WTC11 (cell line): ENCODE measurements at regions of chr18 and their contacts with region 1.

Region 1: GRCh38 chr18:12934454-12935071 is 13.2 kb upstream of the SEH1L start:
- DNase-seq: peak; percentile 87
- ATAC-seq: peak; percentile 95
- H3K4me3 Mint-ChIP-seq: no peak overlapping the region
- H3K27ac Mint-ChIP-seq: no peak overlapping the region
- H3K4me1 Mint-ChIP-seq: peaks cover 6% of the 10 kb centered on the region
- H3K27me3 Mint-ChIP-seq: no peaks in the 10 kb centered on the region; the same call in 1 of the 2 replicates
- CTCF ChIP-seq: peak; percentile 66

Region 2: DNA sequence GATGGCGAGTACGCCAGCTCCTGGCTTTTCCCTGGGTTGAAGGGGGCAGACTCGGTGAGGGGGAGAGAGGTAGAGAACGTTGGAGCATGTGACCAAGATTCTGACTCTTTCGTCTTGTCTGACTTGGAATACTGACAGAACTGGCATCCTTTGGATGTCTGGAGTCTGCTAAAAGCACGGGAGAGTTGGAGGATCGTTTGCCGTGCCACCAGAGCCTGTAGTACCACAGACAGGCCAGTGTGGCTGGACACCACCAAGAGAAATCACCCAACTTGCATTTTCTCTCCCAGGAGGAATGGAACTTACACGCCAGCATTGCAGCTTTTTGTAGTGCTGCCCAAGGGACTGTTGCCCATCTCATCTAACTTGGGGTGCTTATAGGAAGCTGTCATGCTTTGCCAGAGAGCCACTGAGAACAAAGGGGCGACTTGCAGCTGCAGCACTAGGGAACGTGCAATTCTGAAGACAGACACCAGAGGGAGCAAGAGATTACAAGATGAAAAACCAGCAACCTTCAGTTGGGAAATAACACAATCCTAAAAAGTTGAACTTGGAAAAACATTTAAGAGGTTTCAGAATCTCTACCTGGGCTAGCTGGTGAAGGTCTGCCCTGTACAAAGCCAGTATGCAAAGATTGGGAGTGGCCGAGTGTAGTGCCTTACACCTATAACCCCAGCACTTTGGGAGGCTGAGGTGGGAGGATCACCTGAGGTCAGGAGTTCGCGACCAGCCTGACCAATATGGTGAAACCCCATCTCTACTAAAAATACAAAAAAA is 207.6 kb before region 1 on chr18:
- CTCF ChIA-PET with region 1: interaction called, 56 read pairs
- POLR2A ChIA-PET with region 1: no interaction called
- DNase-seq: peak; percentile 60
- ATAC-seq: peak; percentile 89
- H3K4me3 Mint-ChIP-seq: no peak overlapping the region
- H3K27ac Mint-ChIP-seq: peak overlapping the region; percentile 43
- H3K4me1 Mint-ChIP-seq: peaks cover 7% of the 10 kb centered on the region
- H3K27me3 Mint-ChIP-seq: no peaks in the 10 kb centered on the region
- CTCF ChIP-seq: peak; percentile 90

Region 3: DNA sequence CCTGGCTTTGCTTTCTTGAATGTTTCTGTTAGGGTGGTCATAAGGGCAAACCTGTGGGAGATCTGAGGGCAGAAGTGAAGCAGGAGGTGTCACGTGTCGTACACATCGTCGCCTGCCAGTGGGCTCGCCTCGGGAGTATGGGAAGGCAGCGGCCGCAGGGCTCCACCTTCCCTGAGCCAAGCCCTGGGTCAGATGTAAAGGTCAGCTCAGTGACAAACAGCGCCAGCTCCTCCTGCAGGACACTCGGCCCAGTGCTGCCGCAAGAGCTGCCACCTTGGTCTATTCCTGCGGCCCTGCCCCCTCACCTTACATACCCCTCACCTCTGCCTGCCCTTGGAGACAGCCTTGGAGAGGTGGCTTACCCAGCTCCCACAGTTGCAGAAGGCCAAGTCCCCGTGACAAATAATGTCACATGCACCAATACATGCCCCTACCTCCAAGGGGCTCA is 167.6 kb before region 1 on chr18:
- CTCF ChIA-PET with region 1: interaction called, 27 read pairs
- POLR2A ChIA-PET with region 1: no interaction called
- DNase-seq: peak; percentile 82
- ATAC-seq: peak; percentile 99
- H3K4me3 Mint-ChIP-seq: no peak overlapping the region
- H3K27ac Mint-ChIP-seq: no peak overlapping the region
- H3K4me1 Mint-ChIP-seq: peaks cover 4% of the 10 kb centered on the region
- H3K27me3 Mint-ChIP-seq: no peaks in the 10 kb centered on the region
- CTCF ChIP-seq: no peak

Region 4: DNA sequence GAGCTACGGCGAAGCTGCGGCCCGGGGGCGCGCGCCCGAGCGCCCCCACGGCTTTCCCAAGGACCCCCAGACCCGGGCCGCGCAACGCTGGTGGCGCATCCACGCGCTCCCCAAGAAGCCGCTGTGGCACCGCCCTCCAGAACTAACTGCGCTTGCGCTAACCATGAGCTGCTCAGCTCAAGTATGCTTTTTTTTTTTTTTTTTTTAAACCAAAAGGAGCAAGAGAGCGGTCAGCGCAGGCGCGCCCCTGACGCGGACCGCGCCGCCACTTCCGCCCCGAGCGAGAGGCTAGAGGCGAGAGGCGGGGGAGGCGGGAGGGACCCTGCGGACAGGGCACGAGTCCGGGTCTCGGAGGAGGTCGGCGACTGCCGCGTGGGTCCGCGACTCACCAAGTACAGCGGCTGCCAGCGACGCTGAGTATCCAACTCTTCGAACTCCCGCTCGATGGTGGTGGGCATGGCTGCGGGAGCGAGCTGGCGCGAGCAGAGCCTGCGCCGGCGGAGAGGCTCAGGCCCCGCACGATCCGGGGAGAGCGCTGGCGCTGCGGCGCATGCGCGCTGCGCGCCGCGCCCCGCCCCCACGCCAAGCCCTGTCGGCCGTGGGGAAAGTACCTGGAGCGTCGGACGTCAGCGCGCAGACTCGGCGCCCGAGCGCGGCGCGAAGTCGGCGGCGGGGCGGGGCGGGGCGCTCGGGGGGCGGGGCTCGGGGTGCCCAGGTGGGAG is 50.7 kb before region 1 on chr18 and contains the start of gene PTPN2:
- CTCF ChIA-PET with region 1: interaction called, 30 read pairs
- POLR2A ChIA-PET with region 1: interaction called, 6 read pairs
- DNase-seq: peak; percentile 80
- ATAC-seq: peak; percentile 83
- H3K4me3 Mint-ChIP-seq: peak within 1 kb of the TSS; percentile 86
- H3K27ac Mint-ChIP-seq: peak within 1 kb of the TSS; percentile 83
- H3K4me1 Mint-ChIP-seq: peaks cover 63% of the 10 kb centered on the region
- H3K27me3 Mint-ChIP-seq: peaks cover 2% of the 10 kb centered on the region; the same call in 1 of the 2 replicates
- CTCF ChIP-seq: no peak
- total RNA-seq, gene PTPN2: 37.7 to 45.3 TPM (median 43.3 TPM) in 3 replicates

Region 5: GRCh38 chr18:12911025-12911928 is 23.3 kb before region 1 on chr18:
- CTCF ChIA-PET with region 1: interaction called, 23 read pairs
- POLR2A ChIA-PET with region 1: no interaction called
- DNase-seq: peak; percentile 63
- ATAC-seq: peak; percentile 56
- H3K4me3 Mint-ChIP-seq: peak overlapping the region; percentile 63
- H3K27ac Mint-ChIP-seq: no peak overlapping the region
- H3K4me1 Mint-ChIP-seq: no peaks in the 10 kb centered on the region; the same call in 1 of the 2 replicates
- H3K27me3 Mint-ChIP-seq: peaks cover 54% of the 10 kb centered on the region
- CTCF ChIP-seq: no peak